ENCODE measurements at regions of chr6 and their contacts with region 1.

Region 1: GRCh38 chr6:2791124-2791974 is 26.2 kb downstream of the WRNIP1 start:
- DNase-seq: peak; percentile 43
- H3K4me3 ChIP-seq: no peak overlapping the region
- H3K27me3 ChIP-seq: no peaks in the 10 kb centered on the region
- CTCF ChIP-seq: peak; percentile 82

Region 2: GRCh38 chr6:2765166-2765895 is 26.0 kb before region 1 on chr6 and contains the start of gene WRNIP1:
- CTCF ChIA-PET with region 1: interaction called, 11 read pairs
- POLR2A ChIA-PET with region 1: no interaction called
- DNase-seq: peak; percentile 96
- H3K4me3 ChIP-seq: peak within 1 kb of the TSS; percentile 90
- H3K27me3 ChIP-seq: no peaks in the 10 kb centered on the region
- CTCF ChIP-seq: no peak; the same call in 1 of the 2 replicates
- polyA plus RNA-seq, gene WRNIP1: 23.9 and 26.5 TPM in 2 replicates

Region 3: DNA sequence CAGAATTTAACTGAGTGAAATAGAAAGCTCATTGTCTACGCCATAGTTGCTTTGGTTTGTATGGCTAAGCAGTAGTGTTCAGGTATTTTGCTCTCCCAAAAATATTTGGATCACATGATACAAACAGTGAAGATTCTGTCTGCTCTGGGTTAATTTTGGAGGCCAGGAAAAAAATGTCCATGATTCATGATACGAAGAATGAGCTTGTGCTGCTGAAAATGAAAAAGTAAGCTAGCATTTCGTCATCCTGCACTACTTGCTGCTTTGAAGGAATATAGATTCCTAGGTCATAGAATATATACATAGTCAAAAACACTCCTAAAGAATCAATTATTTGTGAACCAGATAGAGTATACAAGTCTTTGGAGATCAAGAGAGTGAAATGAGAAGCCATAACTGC is 17.9 kb before region 1 on chr6:
- CTCF ChIA-PET with region 1: interaction called, 11 read pairs
- POLR2A ChIA-PET with region 1: no interaction called
- DNase-seq: no peak
- H3K4me3 ChIP-seq: no peak overlapping the region
- H3K27me3 ChIP-seq: no peaks in the 10 kb centered on the region
- CTCF ChIP-seq: no peak

Region 4: GRCh38 chr6:2841264-2842138 is 50.2 kb after region 1 on chr6 and contains the start of gene SERPINB1:
- CTCF ChIA-PET with region 1: interaction called, 17 read pairs
- POLR2A ChIA-PET with region 1: no interaction called
- DNase-seq: peak; percentile 84
- H3K4me3 ChIP-seq: peak within 1 kb of the TSS; percentile 55
- H3K27me3 ChIP-seq: no peaks in the 10 kb centered on the region
- CTCF ChIP-seq: no peak
- polyA plus RNA-seq, gene SERPINB1: 17.9 and 31.3 TPM in 2 replicates

Region 5: DNA sequence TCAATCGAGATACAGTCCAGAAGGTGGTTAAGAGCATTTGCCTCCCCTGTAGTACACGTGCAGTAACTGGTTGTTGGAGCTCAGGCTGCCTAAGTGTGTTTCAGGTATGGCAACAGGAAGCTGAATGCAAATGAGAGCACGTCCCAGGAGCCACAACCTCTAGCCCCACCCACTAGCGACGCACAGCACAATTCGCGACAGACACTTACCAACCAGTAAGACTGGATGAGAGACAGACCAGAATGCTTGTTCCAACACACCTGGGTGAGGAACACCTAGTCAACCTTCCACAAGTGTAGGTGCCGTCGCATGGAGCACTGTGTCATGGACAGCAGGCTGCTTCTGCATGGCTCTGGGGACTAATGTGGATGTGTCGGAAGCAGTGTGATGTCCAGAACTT is 57.5 kb after region 1 on chr6:
- CTCF ChIA-PET with region 1: interaction called, 17 read pairs
- POLR2A ChIA-PET with region 1: no interaction called
- DNase-seq: no peak
- H3K4me3 ChIP-seq: no peak overlapping the region
- H3K27me3 ChIP-seq: no peaks in the 10 kb centered on the region
- CTCF ChIP-seq: no peak

Region 6: DNA sequence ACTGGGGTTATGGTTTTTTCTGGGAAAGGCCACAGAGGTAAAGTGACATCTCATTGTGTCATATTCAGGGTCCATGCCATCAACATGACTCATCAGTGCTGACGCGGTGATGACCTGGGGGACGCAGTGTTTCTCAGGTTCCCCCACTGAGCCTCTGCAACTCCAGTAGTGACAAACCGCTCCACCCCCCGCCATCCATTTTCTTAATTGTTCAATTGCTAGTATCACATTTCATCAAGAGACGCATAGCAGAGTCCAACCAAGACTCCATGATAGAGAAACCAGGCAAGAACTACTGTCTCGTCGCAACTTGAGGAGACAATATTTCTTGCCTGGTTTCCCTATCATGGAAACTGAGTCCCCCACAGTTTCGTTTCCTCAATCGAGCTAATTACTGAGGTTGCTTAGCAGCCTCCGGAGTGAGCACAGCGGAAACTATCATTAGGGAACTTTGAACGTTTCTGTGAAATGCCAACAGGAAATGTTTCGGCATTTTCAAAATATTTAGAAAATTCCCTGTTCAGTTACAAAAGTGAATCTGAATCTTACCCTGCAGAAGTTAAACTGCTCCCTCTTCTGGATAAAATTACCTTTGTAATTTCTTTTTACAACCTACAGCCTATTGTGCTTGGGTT is 62.5 kb after region 1 on chr6:
- CTCF ChIA-PET with region 1: interaction called, 13 read pairs
- POLR2A ChIA-PET with region 1: no interaction called
- DNase-seq: no peak
- H3K4me3 ChIP-seq: peak overlapping the region; percentile 31
- H3K27me3 ChIP-seq: no peaks in the 10 kb centered on the region
- CTCF ChIP-seq: peak; percentile 50

Region 7: DNA sequence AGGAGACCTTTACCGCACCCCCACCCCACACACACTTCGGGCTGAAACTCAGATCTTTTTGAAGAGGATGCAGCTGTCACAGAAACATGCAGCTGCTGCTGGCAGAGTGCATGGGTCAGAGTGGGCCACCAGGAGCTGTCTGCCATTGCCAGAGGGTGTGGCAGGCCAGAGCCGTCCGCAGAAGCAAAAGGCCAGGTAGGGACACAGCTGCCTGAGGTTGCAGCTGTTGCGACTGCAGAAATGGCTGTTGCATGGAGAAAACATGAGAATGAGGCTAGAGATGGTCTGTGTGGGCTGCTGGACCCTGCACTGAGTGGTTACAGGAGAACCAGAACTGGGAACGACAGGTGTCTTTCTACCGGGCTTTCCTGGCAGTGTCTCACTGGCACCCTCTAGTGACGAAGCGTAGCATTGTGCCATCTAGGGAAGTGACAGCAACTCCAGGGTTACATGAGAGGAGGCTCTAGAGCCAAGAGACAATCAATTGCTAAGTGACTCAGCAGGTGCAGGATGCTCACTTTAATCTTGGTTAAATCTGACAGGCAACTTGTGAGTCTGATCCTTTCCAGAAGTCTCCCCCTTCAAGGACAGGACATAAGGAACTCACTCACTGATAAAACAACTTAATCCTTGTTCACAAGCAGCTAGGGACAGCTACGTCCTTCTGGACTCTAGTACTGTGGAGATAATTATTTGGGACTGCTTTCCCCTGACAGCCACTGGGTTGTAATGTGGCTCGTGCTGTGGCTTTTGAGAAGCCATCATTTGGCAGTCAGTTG is 140.8 kb after region 1 on chr6:
- CTCF ChIA-PET with region 1: interaction called, 49 read pairs
- POLR2A ChIA-PET with region 1: no interaction called
- DNase-seq: peak; percentile 9
- H3K4me3 ChIP-seq: no peak overlapping the region
- H3K27me3 ChIP-seq: 0 out of 2 replicates have a peak, but pooled peaks cover 2% of the 10 kb centered on the region
- CTCF ChIP-seq: peak; percentile 99